Thyroid gland (tissue), 4 donors: ENCODE measurements at regions of chr18 and their contacts with region 1.

Region 1: GRCh38 chr18:23812546-23813440 is 123.5 kb downstream of the LAMA3 start:
- DNase-seq: no peak
- H3K4me3 ChIP-seq: no peak overlapping the region
- H3K27ac ChIP-seq: no peak overlapping the region
- H3K4me1 ChIP-seq: no peaks in the 10 kb centered on the region
- H3K27me3 ChIP-seq: no peaks in the 10 kb centered on the region
- CTCF ChIP-seq: peak in 3 of 6 experiments; percentile 48 to 62 (median 58)
- POLR2A ChIP-seq: no peak

Region 2: GRCh38 chr18:23629444-23629946 is 183.3 kb before region 1 on chr18:
- intact Hi-C with region 1: loop called (anchors 10 kb)
- DNase-seq: peak; percentile 11 to 33
- H3K4me3 ChIP-seq: no peak overlapping the region
- H3K27ac ChIP-seq: no peak overlapping the region
- H3K4me1 ChIP-seq: no peaks in the 10 kb centered on the region
- H3K27me3 ChIP-seq: no peaks in the 10 kb centered on the region
- CTCF ChIP-seq: no peak
- POLR2A ChIP-seq: no peak

Region 3: DNA sequence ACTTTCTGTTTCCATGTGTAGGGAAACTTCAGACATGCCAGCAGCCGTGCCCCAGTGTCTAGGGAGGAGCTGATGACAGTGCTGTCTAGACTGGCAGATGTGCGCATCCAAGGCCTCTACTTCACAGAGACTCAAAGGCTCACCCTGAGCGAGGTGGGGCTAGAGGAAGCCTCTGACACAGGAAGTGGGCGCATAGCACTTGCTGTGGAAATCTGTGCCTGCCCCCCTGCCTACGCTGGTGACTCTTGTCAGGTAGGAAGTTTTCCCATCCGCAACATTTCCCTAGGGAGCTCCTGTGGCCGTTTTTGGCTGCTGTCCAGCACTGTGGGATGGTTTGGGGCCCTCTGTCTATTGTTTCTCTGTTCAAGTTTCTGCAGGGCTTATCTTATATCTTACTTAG is 58.6 kb after region 1 on chr18:
- intact Hi-C with region 1: no loop called
- DNase-seq: no peak
- H3K4me3 ChIP-seq: no peak overlapping the region
- H3K27ac ChIP-seq: no peak overlapping the region
- H3K4me1 ChIP-seq: no peaks in the 10 kb centered on the region
- H3K27me3 ChIP-seq: no peaks in the 10 kb centered on the region
- CTCF ChIP-seq: no peak
- POLR2A ChIP-seq: no peak

Region 4: GRCh38 chr18:23918401-23919032 is 105.7 kb after region 1 on chr18:
- intact Hi-C with region 1: loop called (anchors 10 kb)
- DNase-seq: peak; percentile 70 to 75
- H3K4me3 ChIP-seq: no peak overlapping the region
- H3K27ac ChIP-seq: no peak overlapping the region
- H3K4me1 ChIP-seq: no peaks in the 10 kb centered on the region
- H3K27me3 ChIP-seq: no peaks in the 10 kb centered on the region
- CTCF ChIP-seq: peak; percentile 60 to 87 (median 66)
- POLR2A ChIP-seq: no peak